PC-9 (cell line): ENCODE measurements at regions of chr14 and their contacts with region 1.

Region 1: DNA sequence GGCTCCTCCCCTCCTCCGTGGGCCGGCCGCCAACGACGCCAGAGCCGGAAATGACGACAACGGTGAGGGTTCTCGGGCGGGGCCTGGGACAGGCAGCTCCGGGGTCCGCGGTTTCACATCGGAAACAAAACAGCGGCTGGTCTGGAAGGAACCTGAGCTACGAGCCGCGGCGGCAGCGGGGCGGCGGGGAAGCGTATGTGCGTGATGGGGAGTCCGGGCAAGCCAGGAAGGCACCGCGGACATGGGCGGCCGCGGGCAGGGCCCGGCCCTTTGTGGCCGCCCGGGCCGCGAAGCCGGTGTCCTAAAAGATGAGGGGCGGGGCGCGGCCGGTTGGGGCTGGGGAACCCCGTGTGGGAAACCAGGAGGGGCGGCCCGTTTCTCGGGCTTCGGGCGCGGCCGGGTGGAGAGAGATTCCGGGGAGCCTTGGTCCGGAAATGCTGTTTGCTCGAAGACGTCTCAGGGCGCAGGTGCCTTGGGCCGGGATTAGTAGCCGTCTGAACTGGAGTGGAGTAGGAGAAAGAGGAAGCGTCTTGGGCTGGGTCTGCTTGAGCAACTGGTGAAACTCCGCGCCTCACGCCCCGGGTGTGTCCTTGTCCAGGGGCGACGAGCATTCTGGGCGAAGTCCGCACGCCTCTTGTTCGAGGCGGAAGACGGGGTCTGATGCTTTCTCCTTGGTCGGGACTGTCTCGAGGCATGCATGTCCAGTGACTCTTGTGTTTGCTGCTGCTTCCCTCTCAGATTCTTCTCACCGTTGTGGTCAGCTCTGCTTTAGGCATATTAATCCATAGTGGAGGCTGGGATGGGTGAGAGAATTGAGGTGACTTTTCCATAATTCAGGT is at the start of gene PSEN1:
- DNase-seq: peak; percentile 78 to 97
- H3K4me3 ChIP-seq: peak within 1 kb of the TSS; percentile 83
- H3K27ac ChIP-seq: peak within 1 kb of the TSS; percentile 89
- H3K4me1 ChIP-seq: peaks cover 9% of the 10 kb centered on the region
- H3K27me3 ChIP-seq: no peaks in the 10 kb centered on the region
- CTCF ChIP-seq: no peak
- total RNA-seq, gene PSEN1: 33.5 and 44.0 TPM in 2 replicates

Region 2: DNA sequence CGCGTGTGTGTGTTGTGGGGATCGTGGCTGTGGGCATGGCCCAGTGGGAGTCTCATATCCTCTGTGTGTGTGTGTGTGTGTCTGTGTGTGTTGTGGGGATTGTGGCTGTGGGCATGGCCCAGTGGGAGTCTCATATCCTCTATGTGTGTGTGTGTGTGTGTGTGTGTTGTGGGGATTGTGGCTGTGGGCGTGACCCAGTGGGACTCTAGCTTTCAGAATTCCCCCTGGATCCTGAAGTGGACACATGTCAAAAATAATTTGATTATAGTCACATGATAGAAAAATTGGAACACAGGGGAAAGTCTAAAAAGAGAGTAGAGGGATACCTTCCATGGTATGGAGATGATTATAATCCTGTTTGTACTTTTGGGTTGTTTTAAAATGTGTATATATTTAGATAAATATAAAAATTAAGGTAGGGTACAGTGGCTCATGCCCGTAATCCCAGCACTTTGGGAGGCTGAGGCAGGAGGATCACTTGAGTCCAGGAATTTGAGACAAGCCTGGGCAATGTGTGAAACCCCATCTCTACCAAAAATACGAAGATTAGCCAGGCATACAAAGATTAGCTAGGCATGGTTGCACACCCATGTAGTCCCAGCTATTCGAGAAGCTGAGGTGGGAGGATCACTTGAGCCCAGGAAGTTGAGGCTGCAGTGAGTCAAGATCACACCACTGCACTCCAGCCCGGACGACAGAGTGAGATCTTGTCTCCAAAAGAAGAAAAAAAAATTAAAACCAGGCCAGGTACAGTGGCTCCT is 111.7 kb after region 1 on chr14:
- CTCF ChIA-PET with region 1: interaction called, 15 read pairs
- POLR2A ChIA-PET with region 1: no interaction called
- intact Hi-C with region 1: no loop called
- DNase-seq: no peak
- H3K4me3 ChIP-seq: no peak overlapping the region
- H3K27ac ChIP-seq: no peak overlapping the region
- H3K4me1 ChIP-seq: no peaks in the 10 kb centered on the region
- H3K27me3 ChIP-seq: 0 out of 2 replicates have a peak, but pooled peaks cover 13% of the 10 kb centered on the region
- CTCF ChIP-seq: no peak

Region 3: GRCh38 chr14:73426877-73427276 is 290.3 kb after region 1 on chr14:
- CTCF ChIA-PET with region 1: no interaction called
- POLR2A ChIA-PET with region 1: no interaction called
- intact Hi-C with region 1: no loop called
- DNase-seq: no peak
- H3K4me3 ChIP-seq: no peak overlapping the region
- H3K27ac ChIP-seq: no peak overlapping the region
- H3K4me1 ChIP-seq: no peaks in the 10 kb centered on the region
- H3K27me3 ChIP-seq: no peaks in the 10 kb centered on the region
- CTCF ChIP-seq: no peak

Region 4: DNA sequence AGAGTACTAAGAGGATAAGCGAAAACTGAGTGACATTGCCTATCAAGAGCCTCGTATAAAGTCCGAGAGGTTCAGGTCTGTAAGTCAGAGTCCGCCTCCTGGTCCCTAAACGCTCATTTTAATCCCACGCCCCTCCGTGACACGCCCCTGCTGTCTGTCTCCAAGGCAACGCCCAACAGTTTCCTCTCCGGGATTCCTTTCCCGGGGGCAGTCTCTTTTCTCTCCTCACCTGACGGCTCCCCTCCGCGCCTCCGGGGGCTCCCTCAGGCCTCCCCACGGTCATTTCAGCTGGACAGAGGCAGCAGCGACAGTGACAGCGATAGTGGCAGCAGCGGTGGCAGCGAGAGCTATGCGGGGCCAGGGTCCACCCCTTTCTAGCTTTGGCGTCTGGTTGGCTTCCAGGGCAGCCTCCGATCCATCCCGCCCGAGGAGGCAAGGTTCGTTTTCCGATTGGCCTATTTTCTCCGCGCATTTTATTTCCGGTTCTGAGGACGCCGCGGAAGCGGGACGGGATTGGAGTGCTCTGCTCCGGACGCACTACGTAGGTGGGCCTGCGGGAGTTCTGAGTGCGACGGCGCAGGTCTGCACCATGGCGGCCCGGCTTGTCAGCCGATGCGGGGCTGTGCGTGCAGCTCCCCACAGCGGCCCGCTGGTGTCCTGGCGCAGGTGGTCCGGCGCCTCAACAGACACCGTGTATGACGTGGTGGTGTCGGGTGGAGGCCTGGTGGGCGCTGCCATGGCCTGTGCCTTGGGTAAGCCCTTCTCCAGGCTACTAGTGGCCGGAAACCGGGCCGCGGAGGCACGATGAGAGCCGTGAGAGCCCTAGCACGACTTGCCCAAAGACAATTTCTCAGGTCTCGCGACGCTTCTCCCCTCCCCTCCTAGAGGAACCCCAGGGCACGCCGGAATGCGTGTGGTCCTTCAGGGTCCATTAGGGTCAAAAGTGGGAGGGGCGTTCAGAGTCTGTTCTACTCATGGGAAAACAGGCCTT is 813.4 kb after region 1 on chr14 and contains the starts of genes COQ6 and FAM161B:
- CTCF ChIA-PET with region 1: interaction called, 28 read pairs
- POLR2A ChIA-PET with region 1: no interaction called
- intact Hi-C with region 1: no loop called
- DNase-seq: peak; percentile 95 to 96
- H3K4me3 ChIP-seq: peak within 1 kb of the TSS; percentile 83
- H3K27ac ChIP-seq: peak within 1 kb of the TSS; percentile 69
- H3K4me1 ChIP-seq: peaks cover 6% of the 10 kb centered on the region; the same call in 1 of the 2 replicates
- H3K27me3 ChIP-seq: no peaks in the 10 kb centered on the region
- CTCF ChIP-seq: no peak
- total RNA-seq, gene COQ6: 25.4 and 25.7 TPM in 2 replicates
- total RNA-seq, gene FAM161B: 1.6 TPM in 2 replicates